ENCODE measurements at regions of chr9 and their contacts with region 1.

Region 1: GRCh38 chr9:37174247-37174646 is 53.9 kb downstream of the ZCCHC7 start:
- DNase-seq: no peak
- ATAC-seq: no peak
- H3K4me3 ChIP-seq: no peak overlapping the region
- H3K27ac ChIP-seq: no peak overlapping the region
- H3K4me1 ChIP-seq: no peaks in the 10 kb centered on the region
- H3K27me3 ChIP-seq: no peaks in the 10 kb centered on the region

Region 2: DNA sequence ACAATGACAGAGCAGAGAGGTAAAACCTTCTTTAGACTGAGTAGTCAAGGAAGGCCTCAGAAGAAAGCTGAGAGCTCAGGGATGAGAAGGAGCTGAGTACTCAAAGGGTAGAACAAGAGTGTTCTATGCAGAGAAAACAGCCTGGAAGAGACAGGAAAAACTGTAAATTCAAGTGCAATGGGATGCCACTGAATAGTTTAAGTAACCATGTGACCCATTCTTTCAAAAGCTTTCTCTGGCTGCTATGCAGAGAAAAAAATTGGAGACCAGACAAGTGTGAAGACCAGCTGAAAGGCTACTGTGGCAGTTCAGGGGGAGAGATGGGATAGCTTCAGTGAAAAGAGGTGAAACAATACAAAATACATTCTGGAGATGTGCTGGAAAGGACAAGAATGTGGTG is 712.9 kb before region 1 on chr9:
- intact Hi-C with region 1: no loop called
- DNase-seq: no peak
- ATAC-seq: no peak
- H3K4me3 ChIP-seq: no peak overlapping the region
- H3K27ac ChIP-seq: no peak overlapping the region
- H3K4me1 ChIP-seq: peaks cover 3% of the 10 kb centered on the region
- H3K27me3 ChIP-seq: no peaks in the 10 kb centered on the region

Region 3: DNA sequence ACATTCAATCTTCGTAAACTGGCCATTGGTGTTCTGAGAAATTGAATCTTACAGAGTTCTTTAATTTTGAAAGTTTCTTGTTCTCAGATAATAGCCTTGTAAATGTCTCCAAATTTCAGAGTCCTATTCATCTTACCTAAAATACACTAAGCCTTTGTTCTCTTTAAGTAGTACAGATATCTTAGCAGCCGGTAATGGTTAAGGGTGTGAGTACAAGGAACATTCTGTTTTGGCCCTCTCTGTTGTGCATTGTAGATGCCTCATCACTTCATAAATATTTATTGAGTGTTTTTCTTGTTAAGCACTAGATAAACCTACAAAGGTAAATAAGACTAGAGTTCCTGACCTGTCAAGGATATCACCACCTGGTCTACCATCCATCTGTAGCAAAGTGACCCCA is 18.6 kb before region 1 on chr9:
- intact Hi-C with region 1: loop called in 1 of 4 experiments (anchors 2 kb)
- DNase-seq: no peak
- ATAC-seq: no peak
- H3K4me3 ChIP-seq: no peak overlapping the region
- H3K27ac ChIP-seq: no peak overlapping the region
- H3K4me1 ChIP-seq: no peaks in the 10 kb centered on the region
- H3K27me3 ChIP-seq: no peaks in the 10 kb centered on the region

Measured in right cardiac atrium (tissue), 5 donors.